K562 (cell line): ENCODE measurements at regions of chr19 and their contacts with region 1.

Region 1: GRCh38 chr19:15555759-15556633 is 47.7 kb downstream of the CYP4F22 start:
- DNase-seq: peak; percentile 95 to 96 (median 96)
- ATAC-seq: peak; percentile 99
- H3K4me3 ChIP-seq: peak overlapping the region; percentile 26
- H3K27ac ChIP-seq: no peak overlapping the region
- H3K4me1 ChIP-seq: peaks cover 5 to 20% of the 10 kb centered on the region in 2 experiments; a peak in 3 of 5 replicates
- H3K27me3 ChIP-seq: peaks cover 2 to 16% of the 10 kb centered on the region in 2 experiments; a peak in 3 of 5 replicates
- CTCF ChIP-seq: peak; percentile 81 to 95 (median 90)
- EP300 ChIP-seq: no peak
- POLR2A ChIP-seq: no peak
- RAD21 ChIP-seq: peak; percentile 72 to 87

Region 2: DNA sequence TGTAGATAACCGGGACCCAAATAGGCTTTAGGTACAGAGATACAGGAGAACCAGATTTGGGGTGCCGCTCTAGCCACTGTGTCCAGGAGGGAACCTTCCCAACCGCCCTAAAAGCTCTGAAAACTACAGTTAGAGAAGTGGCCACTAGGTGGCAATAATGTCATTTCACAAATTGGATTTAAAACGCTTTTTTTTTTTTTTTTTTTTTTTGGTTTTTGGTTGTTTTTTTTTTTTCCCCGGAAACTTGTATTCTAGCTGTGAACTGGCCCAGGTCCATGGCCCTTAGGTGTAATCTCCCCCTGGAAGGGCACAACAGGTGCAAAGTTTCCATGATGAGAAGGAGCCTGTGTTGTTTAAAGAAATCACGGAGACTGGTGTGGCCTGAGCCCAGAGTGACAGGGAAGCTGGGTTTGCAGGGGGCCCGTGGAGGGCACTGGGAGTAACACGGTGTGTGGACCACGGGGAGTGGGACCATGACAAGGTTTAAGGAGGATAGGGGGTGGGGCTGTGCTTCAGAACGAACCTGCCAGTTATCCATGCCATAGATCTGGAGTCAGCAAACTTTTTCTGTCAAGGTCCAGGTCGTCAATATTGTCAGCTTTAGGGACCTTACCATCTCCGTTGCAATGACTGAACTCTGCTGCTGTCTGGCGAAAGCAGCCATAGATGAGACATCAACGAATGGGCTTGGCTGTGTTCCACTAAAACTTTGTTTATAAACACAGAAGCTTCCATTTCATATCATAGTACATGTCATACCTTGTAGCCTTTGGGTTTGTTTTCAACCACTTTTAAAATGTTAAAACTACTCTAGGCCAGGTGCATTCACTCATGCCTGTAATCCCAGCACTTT is 463.9 kb before region 1 on chr19:
- CTCF ChIA-PET with region 1: interaction called, 14 read pairs
- POLR2A ChIA-PET with region 1: no interaction called
- in situ Hi-C with region 1: loop called (anchors 10 kb)
- intact Hi-C with region 1: loop called (anchors 5 kb)
- DNase-seq: peak in 3 of 4 experiments; percentile 53 to 77 (median 53)
- ATAC-seq: peak; percentile 80
- H3K4me3 ChIP-seq: no peak overlapping the region
- H3K27ac ChIP-seq: no peak overlapping the region
- H3K4me1 ChIP-seq: no peaks in the 10 kb centered on the region
- H3K27me3 ChIP-seq: peaks cover 0 to 7% of the 10 kb centered on the region in 2 experiments; a peak in 1 of 5 replicates
- CTCF ChIP-seq: peak; percentile 60 to 72 (median 62)
- EP300 ChIP-seq: no peak
- POLR2A ChIP-seq: no peak
- RAD21 ChIP-seq: peak; percentile 23 to 37; a peak in 2 of 4 replicates

Region 3: GRCh38 chr19:15166700-15167099 is 389.3 kb before region 1 on chr19:
- CTCF ChIA-PET with region 1: interaction called, 9 read pairs
- POLR2A ChIA-PET with region 1: interaction called, 3 read pairs
- in situ Hi-C with region 1: loop called (anchors 5 kb)
- intact Hi-C with region 1: no loop called
- DNase-seq: peak in 3 of 4 experiments; percentile 51 to 66 (median 61)
- ATAC-seq: no peak
- H3K4me3 ChIP-seq: no peak overlapping the region
- H3K27ac ChIP-seq: no peak overlapping the region
- H3K4me1 ChIP-seq: peaks cover 0 to 11% of the 10 kb centered on the region in 2 experiments; a peak in 2 of 5 replicates
- H3K27me3 ChIP-seq: no peaks in the 10 kb centered on the region; a peak in 1 of 5 replicates
- CTCF ChIP-seq: no peak
- EP300 ChIP-seq: no peak
- POLR2A ChIP-seq: no peak
- RAD21 ChIP-seq: no peak

Region 4: GRCh38 chr19:15264061-15264932 is 291.7 kb before region 1 on chr19:
- CTCF ChIA-PET with region 1: interaction called, 11 read pairs
- POLR2A ChIA-PET with region 1: no interaction called
- in situ Hi-C with region 1: loop called (anchors 5 kb)
- intact Hi-C with region 1: loop called (anchors 5 kb)
- DNase-seq: peak; percentile 65 to 79 (median 68)
- ATAC-seq: peak; percentile 91
- H3K4me3 ChIP-seq: no peak overlapping the region
- H3K27ac ChIP-seq: no peak overlapping the region
- H3K4me1 ChIP-seq: peaks cover 0 to 6% of the 10 kb centered on the region in 2 experiments; a peak in 2 of 5 replicates
- H3K27me3 ChIP-seq: no peaks in the 10 kb centered on the region
- CTCF ChIP-seq: peak; percentile 77 to 90 (median 80)
- EP300 ChIP-seq: no peak
- POLR2A ChIP-seq: no peak
- RAD21 ChIP-seq: peak; percentile 64 to 84

Region 5: DNA sequence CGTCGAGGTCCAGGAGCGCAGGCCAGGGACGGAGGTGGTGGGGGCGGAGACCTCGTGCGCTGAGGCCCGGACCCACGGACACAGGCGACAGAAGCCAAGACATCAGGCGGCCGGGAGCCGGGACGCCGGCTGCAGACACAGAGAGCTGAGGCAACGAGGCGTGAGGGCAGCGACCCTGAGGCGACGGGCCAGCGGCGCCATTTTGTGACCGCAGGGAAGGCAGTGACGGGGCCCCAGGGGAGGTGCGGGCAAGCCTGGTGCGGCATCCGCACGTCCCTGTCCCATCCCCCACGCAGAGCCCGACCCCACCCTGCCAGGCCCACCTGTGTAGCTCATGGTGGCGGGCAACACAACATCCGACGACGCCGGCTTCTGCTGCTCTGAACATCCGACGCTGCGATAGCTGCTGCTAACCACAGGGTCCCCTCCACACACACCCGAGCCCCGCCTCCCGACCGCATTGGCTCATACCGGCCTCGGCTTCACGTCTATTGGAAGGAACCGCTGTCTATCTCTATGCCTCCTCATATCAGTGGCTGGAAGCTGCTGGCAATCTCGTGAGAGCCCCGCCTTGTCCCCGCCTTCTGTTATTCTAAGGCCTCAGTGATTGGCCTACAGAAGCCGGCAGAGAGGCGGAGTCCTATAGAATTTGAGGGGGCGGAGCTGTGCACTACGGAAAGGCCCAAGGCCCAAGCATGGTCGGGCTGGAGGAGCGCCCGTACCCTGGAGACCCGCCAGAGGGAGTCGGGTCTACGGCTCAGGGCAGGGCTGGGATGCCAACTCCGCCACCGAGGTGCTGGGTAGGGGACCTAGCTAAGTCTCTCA is 137.2 kb before region 1 on chr19 and contains the start of gene AKAP8L:
- CTCF ChIA-PET with region 1: interaction called, 15 read pairs
- POLR2A ChIA-PET with region 1: interaction called, 8 read pairs
- in situ Hi-C with region 1: no loop called
- intact Hi-C with region 1: loop called (anchors 1 kb)
- DNase-seq: peak; percentile 96 to 100 (median 98)
- ATAC-seq: peak; percentile 98
- H3K4me3 ChIP-seq: peak within 1 kb of the TSS; percentile 85
- H3K27ac ChIP-seq: peak within 1 kb of the TSS; percentile 79
- H3K4me1 ChIP-seq: peaks cover 12 to 36% of the 10 kb centered on the region in 2 experiments; a peak in 4 of 5 replicates
- H3K27me3 ChIP-seq: no peaks in the 10 kb centered on the region
- CTCF ChIP-seq: peak; percentile 83 to 87 (median 86)
- EP300 ChIP-seq: no peak
- POLR2A ChIP-seq: peak; percentile 95
- RAD21 ChIP-seq: peak; percentile 65 to 72
- polyA plus RNA-seq, gene AKAP8L: 2.4 to 7.0 TPM

Region 6: GRCh38 chr19:15456871-15457700 is 98.9 kb before region 1 on chr19:
- CTCF ChIA-PET with region 1: no interaction called
- POLR2A ChIA-PET with region 1: no interaction called
- in situ Hi-C with region 1: no loop called
- intact Hi-C with region 1: no loop called
- DNase-seq: peak in 3 of 4 experiments; percentile 39 to 70 (median 64)
- ATAC-seq: peak; percentile 12; the same call in 2 of the 3 replicates
- H3K4me3 ChIP-seq: no peak overlapping the region
- H3K27ac ChIP-seq: no peak overlapping the region
- H3K4me1 ChIP-seq: peaks cover 6 to 34% of the 10 kb centered on the region in 2 experiments; a peak in 4 of 5 replicates
- H3K27me3 ChIP-seq: peaks cover 0 to 11% of the 10 kb centered on the region in 2 experiments; a peak in 2 of 5 replicates
- CTCF ChIP-seq: no peak
- EP300 ChIP-seq: no peak
- POLR2A ChIP-seq: no peak
- RAD21 ChIP-seq: no peak